ENCODE measurements at regions of chr16 and their contacts with region 1.

Region 1: DNA sequence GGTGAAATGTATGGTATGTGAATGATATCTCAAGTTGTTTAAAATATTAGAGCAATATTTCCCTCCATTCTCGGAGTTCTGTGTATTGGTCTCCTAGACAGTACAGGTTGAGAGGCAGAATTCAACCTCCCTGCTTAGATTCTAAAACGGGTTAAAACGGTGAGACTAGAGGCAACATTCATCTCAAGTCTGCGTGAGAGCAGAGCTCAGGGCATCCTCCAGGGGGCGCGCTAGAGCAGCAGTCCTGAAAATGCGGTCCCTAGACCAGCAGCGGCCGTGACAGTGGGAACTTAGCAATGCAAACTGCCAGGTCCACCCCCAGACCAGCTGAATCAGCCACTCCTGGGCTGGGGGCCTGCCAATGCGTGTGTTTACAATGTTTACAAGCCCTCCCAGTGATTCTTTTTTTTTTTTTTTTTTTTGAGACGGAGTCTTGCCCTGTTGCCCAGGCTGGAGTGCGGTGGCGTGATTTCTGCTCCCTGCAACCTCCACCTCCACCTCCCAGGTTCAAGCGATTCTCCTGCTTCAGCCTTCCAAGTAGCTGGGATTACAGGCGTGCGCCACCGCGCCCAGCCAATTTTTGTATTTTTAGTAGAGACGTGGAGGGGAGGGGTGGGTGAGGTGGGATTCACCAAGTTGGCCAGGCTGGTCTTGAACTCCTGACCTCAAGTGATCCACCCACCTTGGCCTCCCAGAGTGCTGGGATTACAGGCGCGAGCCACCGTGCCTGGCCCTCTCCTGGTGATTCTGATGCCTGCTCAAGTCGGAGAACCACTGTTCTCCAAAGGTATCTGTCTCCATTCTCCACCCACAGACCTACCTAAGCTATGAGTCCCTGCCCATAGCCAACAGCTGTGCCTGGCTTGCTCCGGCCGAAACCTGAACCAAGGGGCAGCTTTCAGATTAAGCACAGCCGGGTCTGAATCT is 24.2 kb downstream of the KLHL36 start:
- DNase-seq: peak; percentile 70 to 76 (median 73)
- H3K4me3 ChIP-seq: no peak overlapping the region
- H3K4me3 Mint-ChIP-seq: peak overlapping the region in 1 of 8 donors; percentile 23
- H3K27ac ChIP-seq: no peak overlapping the region
- H3K27ac Mint-ChIP-seq: peak overlapping the region in 3 of 7 donors; percentile 6 to 68 (median 57)
- H3K4me1 ChIP-seq: no peaks in the 10 kb centered on the region
- H3K4me1 Mint-ChIP-seq: peaks cover 5 to 17% (median 6%) of the 10 kb centered on the region in 4 donors
- H3K27me3 ChIP-seq: no peaks in the 10 kb centered on the region
- H3K27me3 Mint-ChIP-seq: peaks cover 0 to 4% of the 10 kb centered on the region in 2 donors

Region 2: DNA sequence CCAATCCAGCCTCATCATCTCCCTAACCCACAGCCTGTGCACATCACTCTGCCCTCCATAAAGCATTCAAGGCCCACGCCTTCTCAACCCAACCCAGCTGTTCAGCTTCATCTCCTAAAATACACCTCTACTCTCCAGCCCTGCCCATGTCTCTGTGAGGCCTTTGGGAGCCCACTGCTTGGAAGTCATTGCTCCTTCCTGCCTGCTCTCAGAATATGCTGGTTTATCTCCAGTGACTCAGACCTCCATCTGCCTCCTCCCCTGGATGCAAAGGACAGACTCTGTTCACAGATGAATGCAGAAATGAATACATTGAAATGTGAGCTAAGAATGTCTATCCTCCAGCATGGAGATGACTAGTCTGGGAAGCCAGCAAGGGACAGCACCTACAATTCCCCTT is 451.7 kb before region 1 on chr16:
- CTCF ChIA-PET with region 1: no interaction called
- POLR2A ChIA-PET with region 1: no interaction called
- intact Hi-C with region 1: no loop called
- DNase-seq: no peak
- H3K4me3 ChIP-seq: no peak overlapping the region
- H3K4me3 Mint-ChIP-seq: no peak overlapping the region
- H3K27ac ChIP-seq: no peak overlapping the region
- H3K27ac Mint-ChIP-seq: no peak overlapping the region
- H3K4me1 ChIP-seq: no peaks in the 10 kb centered on the region
- H3K4me1 Mint-ChIP-seq: no peaks in the 10 kb centered on the region
- H3K27me3 ChIP-seq: no peaks in the 10 kb centered on the region
- H3K27me3 Mint-ChIP-seq: peaks cover 11 to 12% of the 10 kb centered on the region in 2 donors

Region 3: GRCh38 chr16:84647828-84648594 is 24.5 kb before region 1 on chr16 and contains the start of gene KLHL36:
- CTCF ChIA-PET with region 1: interaction called, 18 read pairs
- POLR2A ChIA-PET with region 1: interaction called, 8 read pairs
- intact Hi-C with region 1: no loop called
- DNase-seq: peak; percentile 68 to 76 (median 72)
- H3K4me3 ChIP-seq: peak within 1 kb of the TSS; percentile 32 to 75
- H3K4me3 Mint-ChIP-seq: peak within 1 kb of the TSS; percentile 86 to 96 (median 94)
- H3K27ac ChIP-seq: peak within 1 kb of the TSS; percentile 62
- H3K27ac Mint-ChIP-seq: peak within 1 kb of the TSS; percentile 86 to 97 (median 96)
- H3K4me1 ChIP-seq: peaks cover 47% of the 10 kb centered on the region
- H3K4me1 Mint-ChIP-seq: peaks cover 30 to 53% (median 41%) of the 10 kb centered on the region in 4 donors
- H3K27me3 ChIP-seq: no peaks in the 10 kb centered on the region
- H3K27me3 Mint-ChIP-seq: no peaks in the 10 kb centered on the region
- total RNA-seq, gene KLHL36: 131 to 149 TPM

Region 4: DNA sequence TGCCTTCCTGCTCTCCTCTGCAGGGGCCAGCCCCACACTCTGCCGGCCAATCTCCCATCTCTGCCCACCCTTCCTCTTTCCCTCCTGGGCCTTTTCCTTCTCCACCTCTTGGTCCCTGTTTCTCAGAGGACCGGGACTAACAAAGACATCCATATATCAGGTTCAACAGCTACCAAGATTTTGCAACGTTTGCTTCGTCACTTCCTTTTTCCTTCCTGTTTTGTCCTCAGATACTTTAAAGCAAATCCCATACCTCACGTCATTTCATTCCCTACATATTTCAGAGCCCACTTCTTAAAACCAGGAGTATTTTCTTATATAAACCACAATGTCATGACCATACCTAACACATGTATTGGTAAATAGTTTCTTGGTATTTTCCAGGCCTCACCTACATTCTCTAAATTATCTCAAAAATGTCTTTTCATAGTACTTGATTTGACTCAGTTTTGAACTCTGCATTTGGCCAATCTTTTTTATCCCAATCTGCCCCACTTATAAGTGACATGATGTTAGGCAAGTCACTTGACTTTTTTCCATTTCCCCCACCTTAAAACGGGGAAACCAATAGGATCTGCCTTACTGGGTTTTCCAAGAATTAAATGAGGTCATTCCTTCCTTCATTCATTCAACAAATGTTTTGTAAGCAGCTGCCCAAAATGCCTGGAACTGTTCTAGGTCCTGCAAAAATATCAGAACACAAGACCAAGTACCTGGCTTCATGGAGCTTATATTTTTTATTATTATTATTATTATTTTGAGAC is 20.1 kb after region 1 on chr16:
- CTCF ChIA-PET with region 1: interaction called, 12 read pairs
- POLR2A ChIA-PET with region 1: no interaction called
- intact Hi-C with region 1: no loop called
- DNase-seq: no peak
- H3K4me3 ChIP-seq: no peak overlapping the region
- H3K4me3 Mint-ChIP-seq: no peak overlapping the region
- H3K27ac ChIP-seq: no peak overlapping the region
- H3K27ac Mint-ChIP-seq: peak overlapping the region in 1 of 7 donors; percentile 55
- H3K4me1 ChIP-seq: no peaks in the 10 kb centered on the region
- H3K4me1 Mint-ChIP-seq: peaks cover 0 to 4% (median 0%) of the 10 kb centered on the region in 4 donors
- H3K27me3 ChIP-seq: no peaks in the 10 kb centered on the region
- H3K27me3 Mint-ChIP-seq: peaks cover 3% of the 10 kb centered on the region in 2 donors

Region 5: DNA sequence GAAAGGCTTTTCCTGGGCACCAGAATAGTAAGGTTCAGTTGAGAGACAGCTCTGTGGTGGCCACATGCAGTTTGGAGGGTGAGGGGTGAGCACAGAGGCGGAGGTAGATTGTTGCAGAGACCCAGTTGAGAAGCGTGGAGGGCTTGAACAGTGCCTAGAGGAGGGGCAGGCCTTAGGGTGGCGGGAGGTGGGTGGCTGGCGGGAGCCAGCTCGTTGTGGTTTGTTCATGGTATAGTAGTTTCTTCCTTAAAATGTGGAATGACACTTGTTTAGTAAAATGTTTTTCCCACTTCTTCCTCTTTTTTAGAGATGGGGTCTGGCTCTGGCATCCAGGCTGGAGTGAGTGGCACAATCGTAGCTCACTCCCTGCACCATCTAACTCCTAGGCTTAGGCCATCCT is 41.5 kb after region 1 on chr16:
- CTCF ChIA-PET with region 1: interaction called, 124 read pairs
- POLR2A ChIA-PET with region 1: no interaction called
- intact Hi-C with region 1: no loop called
- DNase-seq: no peak
- H3K4me3 ChIP-seq: no peak overlapping the region
- H3K4me3 Mint-ChIP-seq: peak overlapping the region in 2 of 8 donors; percentile 5 to 69
- H3K27ac ChIP-seq: no peak overlapping the region
- H3K27ac Mint-ChIP-seq: peak overlapping the region in 4 of 7 donors; percentile 30 to 82 (median 46)
- H3K4me1 ChIP-seq: peaks cover 44% of the 10 kb centered on the region
- H3K4me1 Mint-ChIP-seq: peaks cover 62 to 94% (median 75%) of the 10 kb centered on the region in 4 donors
- H3K27me3 ChIP-seq: no peaks in the 10 kb centered on the region
- H3K27me3 Mint-ChIP-seq: no peaks in the 10 kb centered on the region

Region 6: DNA sequence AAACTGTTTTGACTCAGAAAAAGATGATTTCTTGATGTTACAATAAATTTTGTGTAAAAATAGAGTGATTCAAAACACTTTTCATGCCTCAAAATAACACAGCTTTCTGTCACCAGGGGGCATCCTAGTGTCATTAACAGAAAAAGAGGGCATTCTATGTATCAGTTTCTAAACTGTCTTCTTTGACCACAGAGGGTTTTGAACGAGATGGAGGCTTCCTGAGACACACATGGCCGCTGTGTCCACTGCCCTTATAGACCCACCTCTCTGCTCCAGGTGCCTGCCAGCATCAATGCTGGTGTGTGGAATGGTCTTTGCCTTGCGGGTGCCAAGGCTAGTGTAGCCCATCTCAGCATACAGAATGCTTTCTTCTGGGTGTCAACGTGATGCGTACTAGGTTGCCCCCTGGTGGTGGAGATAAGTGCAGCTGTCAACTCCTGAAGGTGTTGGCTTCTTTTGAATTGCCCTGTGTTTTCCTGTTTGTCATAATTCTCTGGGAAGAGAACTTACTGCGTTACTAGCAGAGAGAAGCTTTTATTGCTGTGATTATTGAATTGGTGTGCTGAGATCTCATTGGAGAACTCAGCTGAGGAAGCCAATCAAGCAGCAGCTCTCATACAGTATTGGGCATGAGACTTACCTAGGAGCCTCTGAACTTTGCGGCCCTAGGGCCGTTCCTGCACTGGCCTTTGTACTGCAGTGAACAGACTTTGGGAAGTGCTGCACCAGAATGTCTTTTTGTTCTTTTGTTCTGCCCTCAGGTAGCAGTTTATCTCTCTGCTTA is 65.9 kb after region 1 on chr16:
- CTCF ChIA-PET with region 1: interaction called, 30 read pairs
- POLR2A ChIA-PET with region 1: no interaction called
- intact Hi-C with region 1: loop called (anchors 1 kb)
- DNase-seq: peak; percentile 75 to 82 (median 78)
- H3K4me3 ChIP-seq: no peak overlapping the region
- H3K4me3 Mint-ChIP-seq: peak overlapping the region; percentile 27 to 80 (median 64)
- H3K27ac ChIP-seq: no peak overlapping the region
- H3K27ac Mint-ChIP-seq: peak overlapping the region; percentile 2 to 87 (median 80)
- H3K4me1 ChIP-seq: peaks cover 33% of the 10 kb centered on the region
- H3K4me1 Mint-ChIP-seq: peaks cover 36 to 53% (median 43%) of the 10 kb centered on the region in 4 donors
- H3K27me3 ChIP-seq: no peaks in the 10 kb centered on the region
- H3K27me3 Mint-ChIP-seq: no peaks in the 10 kb centered on the region

Measured in CD4-positive, alpha-beta memory T cell (primary cell).